Activated CD4-positive, alpha-beta memory T cell treated with anti-CD3 and anti-CD28 coated beads, Interleukin-2, amount 10 ng/mL, durations not matched to agents 7 days and 5 days (primary cell): ENCODE measurements at regions of chr19 and their contacts with region 1.

Region 1: GRCh38 chr19:46788262-46788967 is at the start of gene SLC1A5:
- DNase-seq: peak; percentile 99
- H3K4me3 Mint-ChIP-seq: peak within 1 kb of the TSS; percentile 98
- H3K27ac Mint-ChIP-seq: peak within 1 kb of the TSS; percentile 98
- H3K4me1 Mint-ChIP-seq: peaks cover 61% of the 10 kb centered on the region
- H3K27me3 Mint-ChIP-seq: peaks cover under 1% of the 10 kb centered on the region
- total RNA-seq, gene SLC1A5: 200 to 208 TPM

Region 2: DNA sequence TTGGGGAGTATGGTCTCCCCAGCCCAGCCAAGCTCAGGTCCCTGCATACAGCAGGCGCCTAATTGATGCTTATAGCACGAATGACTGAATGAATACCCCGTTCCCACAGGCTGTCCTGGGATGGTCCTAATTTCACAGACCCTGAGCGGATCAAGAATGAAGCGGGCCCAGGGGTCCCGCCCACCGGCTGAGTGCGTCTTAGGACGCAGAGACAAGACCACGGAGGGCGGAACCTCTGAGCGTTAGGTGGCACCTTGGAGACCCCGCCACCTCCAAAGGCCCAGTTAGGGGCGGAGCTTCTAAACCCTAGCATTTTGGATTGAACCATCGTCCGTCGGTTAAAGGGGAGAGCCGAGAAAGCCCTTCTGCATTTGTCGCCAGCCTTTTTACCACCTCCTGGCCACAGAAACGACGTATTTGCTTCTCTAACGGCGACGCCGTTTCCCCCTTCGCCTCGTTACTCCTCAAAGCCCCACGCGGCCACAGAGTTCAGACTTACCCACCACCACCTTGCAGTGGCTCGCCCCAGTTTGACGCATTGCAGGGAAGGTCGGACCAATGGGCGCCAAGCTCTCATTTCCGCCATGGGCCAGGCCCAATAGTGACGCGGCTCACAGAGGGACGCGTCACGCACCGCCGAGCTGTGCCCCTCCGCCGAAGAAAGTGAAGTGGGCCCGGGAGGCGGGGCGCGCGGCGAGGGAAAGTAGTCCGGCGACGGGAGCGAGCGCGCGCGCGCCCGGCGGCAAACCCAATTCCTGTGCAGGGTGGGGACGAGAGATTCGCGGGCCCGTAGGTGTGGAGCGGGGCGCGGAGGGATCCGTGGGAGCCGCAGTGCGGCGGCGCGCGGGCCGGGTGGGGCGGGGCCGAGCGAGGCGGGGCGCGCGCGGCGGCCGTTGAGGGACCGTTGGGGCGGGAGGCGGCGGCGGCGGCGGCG is 187.8 kb before region 1 on chr19:
- CTCF ChIA-PET with region 1: no interaction called
- POLR2A ChIA-PET with region 1: interaction called, 19 read pairs
- DNase-seq: peak; percentile 97
- H3K4me3 Mint-ChIP-seq: peak overlapping the region; percentile 100
- H3K27ac Mint-ChIP-seq: peak overlapping the region; percentile 100
- H3K4me1 Mint-ChIP-seq: peaks cover 38% of the 10 kb centered on the region
- H3K27me3 Mint-ChIP-seq: peaks cover 12% of the 10 kb centered on the region

Region 3: GRCh38 chr19:46746281-46747013 is 42.0 kb before region 1 on chr19 and contains the start of gene STRN4:
- CTCF ChIA-PET with region 1: interaction called, 4 read pairs
- POLR2A ChIA-PET with region 1: interaction called, 11 read pairs
- DNase-seq: peak; percentile 65
- H3K4me3 Mint-ChIP-seq: peak within 1 kb of the TSS; percentile 93
- H3K27ac Mint-ChIP-seq: peak within 1 kb of the TSS; percentile 80
- H3K4me1 Mint-ChIP-seq: peaks cover 53% of the 10 kb centered on the region
- H3K27me3 Mint-ChIP-seq: no peaks in the 10 kb centered on the region
- total RNA-seq, gene STRN4: 75.1 to 78.5 TPM

Region 4: GRCh38 chr19:46776927-46777911 is 11.2 kb before region 1 on chr19:
- CTCF ChIA-PET with region 1: interaction called, 5 read pairs
- POLR2A ChIA-PET with region 1: interaction called, 10 read pairs
- DNase-seq: no peak
- H3K4me3 Mint-ChIP-seq: no peak overlapping the region
- H3K27ac Mint-ChIP-seq: no peak overlapping the region
- H3K4me1 Mint-ChIP-seq: peaks cover 48% of the 10 kb centered on the region
- H3K27me3 Mint-ChIP-seq: no peaks in the 10 kb centered on the region

Region 5: DNA sequence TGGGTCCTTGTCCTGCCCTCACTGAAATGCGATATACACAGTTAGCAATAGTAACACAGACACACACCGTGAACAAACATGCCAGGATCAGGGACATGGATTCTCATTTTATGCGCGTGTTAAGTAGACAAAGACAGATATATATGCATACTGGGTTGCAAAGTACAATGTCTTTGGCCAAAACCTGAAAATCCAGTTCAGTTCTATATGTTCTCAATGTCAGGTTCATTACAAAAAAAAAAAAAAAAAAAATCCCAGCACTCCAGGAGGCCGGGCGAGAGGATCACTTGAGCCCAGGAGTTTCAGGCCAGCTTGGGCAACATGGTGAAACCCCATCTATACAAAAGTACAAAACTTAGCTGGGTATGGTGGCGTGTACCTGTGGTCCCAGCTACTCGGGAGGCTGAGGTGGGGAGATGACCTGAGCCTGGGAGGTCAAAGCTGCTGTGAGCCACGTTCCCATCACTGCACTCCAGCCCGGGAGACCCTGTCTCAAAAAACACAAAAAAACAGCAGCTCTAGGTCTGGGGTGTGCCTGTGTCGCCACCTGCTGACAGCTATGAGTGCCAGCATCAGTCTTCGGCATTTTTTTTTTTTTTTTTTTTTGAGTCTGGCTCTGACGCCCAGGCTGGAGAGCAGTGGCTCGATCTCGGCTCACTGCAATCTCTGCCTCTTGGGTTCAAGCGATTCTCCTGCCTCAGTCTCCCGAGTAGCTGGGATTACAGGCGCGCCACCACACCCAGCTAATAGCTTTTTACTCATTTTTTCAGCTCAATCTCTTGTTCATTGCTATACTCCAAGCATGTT is 51.9 kb after region 1 on chr19:
- CTCF ChIA-PET with region 1: interaction called, 15 read pairs
- POLR2A ChIA-PET with region 1: interaction called, 7 read pairs
- DNase-seq: peak; percentile 62
- H3K4me3 Mint-ChIP-seq: no peak overlapping the region
- H3K27ac Mint-ChIP-seq: peak overlapping the region; percentile 26
- H3K4me1 Mint-ChIP-seq: peaks cover 1% of the 10 kb centered on the region
- H3K27me3 Mint-ChIP-seq: no peaks in the 10 kb centered on the region

Region 6: DNA sequence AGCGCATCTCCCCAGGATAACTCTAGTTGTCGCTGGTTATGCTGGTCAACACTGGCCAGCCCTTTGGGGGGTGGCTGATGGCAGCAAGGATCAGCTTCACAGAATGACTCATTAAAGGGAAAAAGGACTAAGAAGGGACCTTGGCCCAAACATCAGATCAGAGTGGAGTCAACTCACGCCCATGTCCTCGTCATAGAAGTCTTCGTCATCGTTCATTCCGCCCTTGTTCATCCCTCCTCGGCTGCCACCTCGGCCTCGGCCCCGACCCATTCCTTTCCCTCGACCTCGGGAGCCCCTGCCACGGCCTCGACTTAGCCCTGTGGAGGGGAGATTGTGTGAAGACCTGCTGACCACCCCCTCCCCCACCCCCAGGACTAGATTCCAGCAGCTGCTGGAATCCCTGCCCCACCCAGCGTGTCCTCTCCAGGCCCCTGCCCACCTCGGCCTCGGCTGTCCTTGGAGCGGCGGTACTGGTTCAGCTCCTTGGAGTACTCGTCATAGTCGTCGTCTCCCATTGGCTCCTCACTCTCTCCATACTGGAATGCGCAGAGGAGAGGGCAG is 296.5 kb after region 1 on chr19:
- CTCF ChIA-PET with region 1: no interaction called
- POLR2A ChIA-PET with region 1: no interaction called
- DNase-seq: no peak
- H3K4me3 Mint-ChIP-seq: no peak overlapping the region
- H3K27ac Mint-ChIP-seq: peak overlapping the region; percentile 40
- H3K4me1 Mint-ChIP-seq: peaks cover 17% of the 10 kb centered on the region
- H3K27me3 Mint-ChIP-seq: no peaks in the 10 kb centered on the region